SK-N-SH (cell line): ENCODE measurements at regions of chr7 and their contacts with region 1.

Region 1: DNA sequence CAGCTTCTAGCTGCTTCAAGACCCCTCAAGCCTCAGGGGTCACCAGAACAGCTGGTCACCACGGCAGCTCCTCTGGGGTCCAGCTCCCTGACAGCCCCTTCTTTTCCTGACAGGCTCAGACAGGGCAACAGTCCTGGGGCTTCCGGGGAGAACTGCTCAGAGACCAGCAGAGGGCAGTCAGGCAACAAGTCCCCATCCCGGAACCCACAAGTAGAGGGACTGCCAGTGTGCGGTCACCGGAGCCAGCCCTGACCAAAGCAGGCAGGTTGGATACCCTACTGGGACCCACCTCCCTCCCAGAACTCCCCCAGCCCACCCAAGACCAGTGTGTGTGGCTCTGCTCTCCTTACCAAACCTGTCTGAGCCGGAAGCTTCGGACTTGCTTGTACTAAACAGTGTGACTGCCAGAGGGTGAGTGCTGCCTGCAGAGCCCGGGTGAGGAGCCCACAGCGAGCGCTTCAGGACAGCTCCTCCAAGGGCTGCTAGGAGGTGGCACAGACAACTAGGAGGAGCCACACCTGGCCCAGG is 40.3 kb downstream of the YKT6 start:
- DNase-seq: peak; percentile 96
- H3K4me3 ChIP-seq: no peak overlapping the region
- H3K27ac ChIP-seq: no peak overlapping the region
- H3K4me1 ChIP-seq: peaks cover 0 to 32% of the 10 kb centered on the region in 2 experiments; a peak in 1 of 4 replicates
- H3K27me3 ChIP-seq: no peaks in the 10 kb centered on the region
- CTCF ChIP-seq: peak; percentile 92
- EP300 ChIP-seq: no peak
- RAD21 ChIP-seq: peak; percentile 95

Region 2: DNA sequence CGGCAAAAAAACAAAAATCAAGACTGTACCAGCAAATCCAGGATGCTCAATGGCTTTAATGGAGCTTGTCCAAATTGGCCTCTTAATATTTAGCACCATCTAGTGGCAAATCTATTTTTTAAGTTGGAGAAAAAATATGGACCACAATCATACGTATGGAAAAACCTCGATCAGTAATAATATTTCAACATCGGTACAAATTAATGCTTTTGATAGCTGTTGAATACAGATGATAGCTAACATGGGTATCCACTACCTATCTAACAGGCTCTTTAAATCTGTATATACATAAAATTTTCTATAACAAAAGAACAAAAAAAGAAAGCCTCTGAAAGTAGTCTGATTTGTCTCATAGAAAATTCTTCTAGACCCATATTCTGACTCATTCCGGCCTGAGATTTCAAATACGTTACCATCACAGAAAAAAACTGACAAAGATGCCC is 541.0 kb before region 1 on chr7:
- CTCF ChIA-PET with region 1: no interaction called
- POLR2A ChIA-PET with region 1: no interaction called
- DNase-seq: peak; percentile 59
- H3K4me3 ChIP-seq: peak overlapping the region in 1 of 2 experiments; percentile 10; a peak in 1 of 4 replicates
- H3K27ac ChIP-seq: peak overlapping the region in 1 of 2 experiments; percentile 74; a peak in 2 of 4 replicates
- H3K4me1 ChIP-seq: peaks cover 12 to 40% of the 10 kb centered on the region in 2 experiments; a peak in 3 of 4 replicates
- H3K27me3 ChIP-seq: no peaks in the 10 kb centered on the region
- CTCF ChIP-seq: peak; percentile 94
- EP300 ChIP-seq: no peak
- RAD21 ChIP-seq: peak; percentile 98

Region 3: DNA sequence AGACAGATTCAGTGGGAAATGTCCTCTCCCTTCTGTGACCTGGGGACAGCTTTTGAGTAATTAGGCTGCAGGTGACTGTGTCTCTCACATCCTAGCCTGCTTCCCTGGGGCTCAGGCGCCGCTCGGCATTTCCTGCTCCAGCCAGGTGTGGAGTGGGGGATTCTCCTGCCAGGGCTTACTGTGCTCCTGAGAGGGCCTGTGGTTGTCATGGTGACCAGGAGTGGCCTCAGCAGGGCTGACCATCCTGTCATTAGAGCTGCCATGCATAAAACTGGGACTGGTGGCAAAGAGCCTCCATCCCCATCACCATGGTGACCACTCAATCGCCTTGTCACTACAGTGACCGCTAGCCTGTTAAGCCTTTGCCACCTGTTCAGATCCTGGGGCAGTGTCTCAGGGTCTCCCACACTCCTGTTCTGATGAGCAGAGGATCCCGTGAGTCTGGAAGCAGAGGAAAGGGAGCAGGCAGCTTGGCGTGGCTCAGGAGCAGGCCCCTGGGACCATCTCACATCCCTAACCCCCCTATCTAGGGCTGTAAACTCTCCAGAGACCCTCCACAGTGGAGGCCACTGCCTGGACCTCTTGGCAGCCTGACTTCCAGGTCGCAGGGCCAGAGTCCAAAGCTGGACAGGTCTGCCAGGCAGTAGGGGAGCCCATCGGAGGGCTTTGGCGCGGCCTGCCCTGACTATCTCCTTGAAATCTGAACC is 51.6 kb before region 1 on chr7 and contains the start of gene GCK:
- CTCF ChIA-PET with region 1: no interaction called
- POLR2A ChIA-PET with region 1: no interaction called
- DNase-seq: no peak
- H3K4me3 ChIP-seq: no peak within 1 kb of the TSS
- H3K27ac ChIP-seq: no peak within 1 kb of the TSS
- H3K4me1 ChIP-seq: peaks cover 0 to 8% of the 10 kb centered on the region in 2 experiments; a peak in 2 of 4 replicates
- H3K27me3 ChIP-seq: no peaks in the 10 kb centered on the region
- CTCF ChIP-seq: no peak
- EP300 ChIP-seq: no peak
- RAD21 ChIP-seq: no peak
- polyA plus RNA-seq, gene GCK: 1.1 and 1.6 TPM in 2 replicates

Region 4: GRCh38 chr7:44218418-44219201 is 22.4 kb before region 1 on chr7:
- CTCF ChIA-PET with region 1: interaction called, 70 read pairs
- POLR2A ChIA-PET with region 1: interaction called, 4 read pairs
- DNase-seq: peak; percentile 81
- H3K4me3 ChIP-seq: no peak overlapping the region
- H3K27ac ChIP-seq: peak overlapping the region in 1 of 2 experiments; percentile 77; a peak in 2 of 4 replicates
- H3K4me1 ChIP-seq: peaks cover 0 to 42% of the 10 kb centered on the region in 2 experiments; a peak in 1 of 4 replicates
- H3K27me3 ChIP-seq: no peaks in the 10 kb centered on the region
- CTCF ChIP-seq: no peak
- EP300 ChIP-seq: no peak
- RAD21 ChIP-seq: no peak

Region 5: GRCh38 chr7:44264221-44264931 is 23.3 kb after region 1 on chr7:
- CTCF ChIA-PET with region 1: interaction called, 101 read pairs
- POLR2A ChIA-PET with region 1: no interaction called
- DNase-seq: peak; percentile 89
- H3K4me3 ChIP-seq: no peak overlapping the region; a peak in 1 of 4 replicates
- H3K27ac ChIP-seq: peak overlapping the region in 1 of 2 experiments; percentile 68; a peak in 2 of 4 replicates
- H3K4me1 ChIP-seq: peaks cover 4 to 52% of the 10 kb centered on the region in 2 experiments
- H3K27me3 ChIP-seq: peaks cover 48% of the 10 kb centered on the region
- CTCF ChIP-seq: no peak
- EP300 ChIP-seq: no peak
- RAD21 ChIP-seq: no peak; the same call in 1 of the 2 replicates

Region 6: GRCh38 chr7:44307301-44307900 is 66.4 kb after region 1 on chr7:
- CTCF ChIA-PET with region 1: interaction called, 73 read pairs
- POLR2A ChIA-PET with region 1: no interaction called
- DNase-seq: peak; percentile 87
- H3K4me3 ChIP-seq: no peak overlapping the region
- H3K27ac ChIP-seq: no peak overlapping the region
- H3K4me1 ChIP-seq: peaks cover 0 to 4% of the 10 kb centered on the region in 2 experiments; a peak in 1 of 4 replicates
- H3K27me3 ChIP-seq: no peaks in the 10 kb centered on the region
- CTCF ChIP-seq: peak; percentile 56
- EP300 ChIP-seq: no peak
- RAD21 ChIP-seq: peak; percentile 89

Region 7: DNA sequence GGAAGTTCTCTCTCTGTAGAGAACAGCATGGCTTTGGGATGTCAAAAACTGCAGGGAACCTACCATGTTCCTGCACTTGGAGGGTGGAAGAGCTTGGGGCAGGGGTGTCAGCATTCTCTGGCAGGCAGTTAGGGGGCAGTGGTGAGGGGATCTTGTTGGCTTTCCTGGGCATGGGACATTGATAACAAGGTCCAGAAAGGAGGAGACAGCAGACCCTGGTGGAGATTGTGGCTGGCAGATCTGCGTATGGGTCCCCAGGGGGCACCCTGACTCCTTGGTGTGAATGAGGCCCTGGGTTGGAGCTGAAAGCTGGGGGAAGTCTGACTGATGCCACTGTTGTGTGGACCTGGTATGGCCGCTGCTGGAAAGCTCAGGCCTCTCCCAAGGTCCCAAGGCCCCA is 107.3 kb after region 1 on chr7:
- CTCF ChIA-PET with region 1: interaction called, 18 read pairs
- POLR2A ChIA-PET with region 1: no interaction called
- DNase-seq: peak; percentile 44
- H3K4me3 ChIP-seq: no peak overlapping the region
- H3K27ac ChIP-seq: no peak overlapping the region
- H3K4me1 ChIP-seq: no peaks in the 10 kb centered on the region; a peak in 1 of 4 replicates
- H3K27me3 ChIP-seq: peaks cover 10% of the 10 kb centered on the region; the same call in 1 of the 2 replicates
- CTCF ChIP-seq: peak; percentile 61
- EP300 ChIP-seq: no peak
- RAD21 ChIP-seq: peak; percentile 62

Region 8: GRCh38 chr7:44477063-44477830 is 236.2 kb after region 1 on chr7:
- CTCF ChIA-PET with region 1: interaction called, 17 read pairs
- POLR2A ChIA-PET with region 1: no interaction called
- DNase-seq: peak; percentile 72
- H3K4me3 ChIP-seq: no peak overlapping the region; a peak in 1 of 4 replicates
- H3K27ac ChIP-seq: no peak overlapping the region
- H3K4me1 ChIP-seq: peaks cover 9 to 13% of the 10 kb centered on the region in 2 experiments; a peak in 3 of 4 replicates
- H3K27me3 ChIP-seq: no peaks in the 10 kb centered on the region
- CTCF ChIP-seq: peak; percentile 100
- EP300 ChIP-seq: no peak
- RAD21 ChIP-seq: peak; percentile 98